ENCODE measurements at regions of chr14 and their contacts with region 1.

Region 1: GRCh38 chr14:23120541-23121251 is 1.6 kb upstream of the CEBPE start:
- DNase-seq: peak; percentile 89
- H3K4me3 Mint-ChIP-seq: peak overlapping the region; percentile 38
- H3K27ac Mint-ChIP-seq: peak overlapping the region; percentile 98
- H3K4me1 Mint-ChIP-seq: peaks cover 37% of the 10 kb centered on the region
- H3K27me3 Mint-ChIP-seq: peaks cover 22% of the 10 kb centered on the region

Region 2: DNA sequence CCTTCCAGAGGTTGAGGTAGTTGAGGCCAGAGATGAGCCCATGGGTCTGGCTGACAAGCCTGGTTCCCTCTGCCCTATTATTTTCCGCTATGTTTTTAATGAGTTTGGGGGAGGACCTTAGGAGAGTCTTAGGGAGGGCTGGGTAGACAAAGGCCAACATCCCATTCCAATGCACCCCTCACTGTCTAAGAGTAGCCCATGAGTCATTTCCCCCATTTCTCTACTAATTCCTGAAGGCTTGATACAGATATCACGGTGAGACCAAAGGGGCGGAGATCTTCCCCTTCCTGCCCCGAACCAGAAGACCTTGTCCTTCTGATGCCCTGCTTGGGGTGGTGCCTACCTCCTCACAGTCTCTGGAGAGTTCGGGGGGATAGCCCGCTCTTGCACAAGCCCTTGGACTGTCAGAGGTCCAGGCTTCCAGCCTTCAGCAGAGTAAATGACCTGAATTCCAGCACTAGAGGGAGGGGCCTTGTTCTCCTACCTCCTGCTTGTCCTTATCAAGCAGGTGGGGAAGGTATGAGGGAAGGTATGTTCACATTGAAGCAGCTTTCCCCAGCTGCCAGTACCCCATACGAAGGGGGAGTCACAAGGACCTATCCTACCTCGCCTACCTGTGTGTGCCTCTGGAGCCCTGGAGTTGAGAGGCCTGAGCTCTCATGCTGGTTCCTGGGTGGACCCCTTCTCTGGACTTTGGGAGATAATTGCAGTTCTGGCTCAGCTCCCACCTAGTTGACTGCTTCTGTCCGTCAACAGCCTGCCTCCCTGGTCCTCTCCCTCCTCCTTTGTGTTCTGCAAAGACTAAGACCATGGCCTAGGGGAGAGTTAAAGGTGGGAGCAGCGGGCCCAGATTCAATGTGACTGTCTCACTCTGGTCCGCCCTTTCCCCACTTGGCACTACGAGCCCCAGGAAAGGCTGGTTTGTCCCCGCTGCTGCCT is 75.0 kb before region 1 on chr14:
- CTCF ChIA-PET with region 1: no interaction called
- DNase-seq: no peak
- H3K4me3 Mint-ChIP-seq: no peak overlapping the region
- H3K27ac Mint-ChIP-seq: no peak overlapping the region
- H3K4me1 Mint-ChIP-seq: no peaks in the 10 kb centered on the region
- H3K27me3 Mint-ChIP-seq: peaks cover 39% of the 10 kb centered on the region

Region 3: DNA sequence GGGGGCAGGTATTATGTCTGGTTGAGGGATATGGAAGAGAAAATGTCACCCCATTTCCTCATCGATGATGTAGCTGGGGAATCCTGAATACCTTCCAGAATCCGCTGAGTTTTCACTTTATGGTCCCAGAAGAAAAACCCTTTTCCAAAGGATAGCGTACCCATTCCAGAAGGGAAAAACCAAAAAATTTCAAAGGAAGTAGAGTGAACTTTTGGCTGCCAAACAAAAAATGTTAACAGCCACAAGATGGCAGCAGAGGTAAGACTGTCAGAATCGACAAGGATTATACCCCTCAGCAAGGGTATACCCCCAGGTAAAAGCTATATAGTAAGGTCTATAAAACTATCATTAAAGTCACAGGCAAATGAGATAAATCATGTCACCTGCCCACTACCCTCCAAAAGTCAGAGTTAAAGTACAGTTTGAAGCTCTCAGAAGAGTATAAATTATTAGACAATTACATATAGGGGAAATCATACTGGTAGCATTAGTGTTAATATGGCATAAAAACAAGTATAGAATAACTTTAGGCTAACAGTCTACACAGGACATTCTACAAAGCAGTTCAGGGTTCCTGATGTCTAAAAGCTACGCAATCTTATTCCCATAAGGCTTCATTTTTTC is 43.8 kb before region 1 on chr14:
- CTCF ChIA-PET with region 1: interaction called, 11 read pairs
- DNase-seq: peak; percentile 51
- H3K4me3 Mint-ChIP-seq: no peak overlapping the region
- H3K27ac Mint-ChIP-seq: no peak overlapping the region
- H3K4me1 Mint-ChIP-seq: peaks cover 5% of the 10 kb centered on the region
- H3K27me3 Mint-ChIP-seq: no peaks in the 10 kb centered on the region

Region 4: DNA sequence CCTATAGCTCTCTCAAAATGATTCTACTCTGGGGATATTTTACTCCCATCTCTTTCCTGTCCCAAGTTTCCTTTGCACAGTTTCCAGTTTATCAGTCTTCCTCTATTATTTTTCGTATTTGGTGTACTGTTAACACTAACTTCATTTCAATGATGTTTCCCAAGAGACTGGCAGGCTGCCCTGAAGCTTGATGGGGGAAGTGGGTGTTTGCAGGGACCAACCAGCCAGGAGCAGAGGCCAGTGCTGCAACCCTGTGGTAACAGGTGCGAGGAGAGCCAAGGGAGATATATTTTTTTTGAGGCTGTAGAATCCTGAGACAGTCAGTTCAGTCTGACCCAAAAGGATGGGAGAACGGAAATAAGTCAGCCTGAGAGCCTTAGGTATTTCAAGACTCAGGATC is 10.2 kb after region 1 on chr14:
- CTCF ChIA-PET with region 1: interaction called, 15 read pairs
- DNase-seq: no peak
- H3K4me3 Mint-ChIP-seq: no peak overlapping the region
- H3K27ac Mint-ChIP-seq: no peak overlapping the region
- H3K4me1 Mint-ChIP-seq: peaks cover 9% of the 10 kb centered on the region
- H3K27me3 Mint-ChIP-seq: peaks cover 18% of the 10 kb centered on the region

Region 5: GRCh38 chr14:23174276-23175184 is 53.8 kb after region 1 on chr14:
- CTCF ChIA-PET with region 1: interaction called, 29 read pairs
- DNase-seq: no peak
- H3K4me3 Mint-ChIP-seq: no peak overlapping the region
- H3K27ac Mint-ChIP-seq: no peak overlapping the region
- H3K4me1 Mint-ChIP-seq: peaks cover 16% of the 10 kb centered on the region
- H3K27me3 Mint-ChIP-seq: peaks cover 28% of the 10 kb centered on the region

Region 6: DNA sequence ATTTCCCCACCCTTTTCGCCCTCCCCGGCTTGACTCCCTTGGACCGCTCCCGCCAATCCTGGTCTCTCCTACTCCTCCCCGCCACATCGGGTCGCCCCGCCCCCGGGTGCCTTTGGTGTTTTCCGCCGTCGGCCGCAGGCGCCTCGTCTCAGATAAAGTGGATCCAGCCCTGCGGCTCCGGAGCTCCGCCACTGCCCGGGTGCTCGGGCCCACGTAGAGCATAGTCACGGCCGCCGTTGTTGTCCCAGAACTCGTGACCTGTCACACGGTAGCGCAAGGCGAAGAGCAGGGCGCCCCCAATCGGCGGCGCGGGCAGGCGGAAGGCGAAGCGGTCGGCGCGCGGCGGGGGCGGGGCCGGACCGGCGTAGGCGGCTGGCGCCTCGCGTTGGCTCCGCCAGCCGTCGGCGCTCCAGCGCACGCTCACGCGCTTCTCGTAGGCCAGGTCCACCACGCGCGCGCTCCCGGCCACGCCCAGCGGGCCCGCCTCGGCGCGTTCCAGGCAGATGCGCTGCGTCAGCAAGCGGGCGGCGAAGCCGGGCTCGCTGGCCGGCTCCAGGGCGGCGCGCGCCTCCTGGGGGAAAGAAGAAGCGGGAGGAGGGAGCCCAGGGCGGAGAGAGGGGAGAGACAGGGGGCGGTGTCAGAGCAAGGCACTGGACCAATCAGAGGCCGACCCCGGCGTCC is 180.7 kb after region 1 on chr14:
- CTCF ChIA-PET with region 1: interaction called, 32 read pairs
- DNase-seq: peak; percentile 97
- H3K4me3 Mint-ChIP-seq: peak overlapping the region; percentile 97
- H3K27ac Mint-ChIP-seq: peak overlapping the region; percentile 100
- H3K4me1 Mint-ChIP-seq: peaks cover 36% of the 10 kb centered on the region
- H3K27me3 Mint-ChIP-seq: peaks cover 26% of the 10 kb centered on the region